ENCODE measurements at regions of chr2 and their contacts with region 1.

Region 1: DNA sequence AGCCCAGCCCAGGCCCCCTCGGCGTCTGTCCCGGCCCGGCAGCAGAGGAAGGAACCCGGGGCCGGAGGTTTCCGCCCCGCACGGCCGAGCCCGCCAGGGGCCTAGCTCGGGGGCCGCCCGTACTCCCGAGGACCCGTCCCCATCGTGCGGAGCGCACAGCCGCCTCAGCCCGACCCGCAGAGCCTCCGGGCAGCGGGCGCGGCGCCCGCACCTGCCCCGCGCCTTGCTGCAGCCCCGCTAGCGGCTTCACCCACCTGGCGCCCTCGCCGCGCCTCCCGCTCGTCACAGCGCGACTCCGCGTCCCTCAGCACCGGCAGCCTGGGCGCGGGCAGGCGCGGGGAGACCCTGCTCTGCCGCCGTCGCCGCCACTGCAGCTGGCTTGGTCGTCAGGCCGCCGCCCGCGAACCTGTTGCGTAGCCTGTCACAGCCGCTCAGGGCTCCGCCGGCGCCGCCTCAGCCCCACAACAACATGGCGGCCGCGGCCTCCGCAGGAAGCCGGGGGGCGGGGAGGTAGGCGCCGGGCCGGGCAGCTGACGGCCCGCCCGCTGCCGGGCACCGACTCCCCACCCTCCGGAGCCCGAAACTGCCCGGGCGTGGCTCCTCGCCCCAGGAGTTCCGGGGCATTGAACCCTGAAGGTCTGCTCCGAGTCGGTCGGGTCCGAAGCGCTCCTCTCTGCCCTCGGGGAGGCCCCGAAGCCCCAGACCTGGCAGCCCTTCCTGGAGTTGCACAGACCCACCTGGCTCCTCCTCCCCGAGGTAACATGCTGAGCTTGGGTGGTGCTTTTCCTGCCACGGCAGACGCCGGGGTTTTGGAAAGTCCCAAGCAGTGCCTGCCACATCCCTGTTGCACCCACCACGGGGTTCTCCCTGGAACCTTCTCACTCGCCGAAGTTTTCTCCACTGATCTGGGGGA is at the start of gene ITSN2:
- ATAC-seq: peak; percentile 85 to 94 (median 89)
- H3K4me3 ChIP-seq: peak within 1 kb of the TSS; percentile 60 to 89 (median 79)
- H3K27ac ChIP-seq: peak within 1 kb of the TSS in 1 of 2 donors; percentile 65
- H3K4me1 ChIP-seq: no peaks in the 10 kb centered on the region
- total RNA-seq, gene ITSN2: 5.1 to 41.5 (median 14.3) TPM

Region 2: DNA sequence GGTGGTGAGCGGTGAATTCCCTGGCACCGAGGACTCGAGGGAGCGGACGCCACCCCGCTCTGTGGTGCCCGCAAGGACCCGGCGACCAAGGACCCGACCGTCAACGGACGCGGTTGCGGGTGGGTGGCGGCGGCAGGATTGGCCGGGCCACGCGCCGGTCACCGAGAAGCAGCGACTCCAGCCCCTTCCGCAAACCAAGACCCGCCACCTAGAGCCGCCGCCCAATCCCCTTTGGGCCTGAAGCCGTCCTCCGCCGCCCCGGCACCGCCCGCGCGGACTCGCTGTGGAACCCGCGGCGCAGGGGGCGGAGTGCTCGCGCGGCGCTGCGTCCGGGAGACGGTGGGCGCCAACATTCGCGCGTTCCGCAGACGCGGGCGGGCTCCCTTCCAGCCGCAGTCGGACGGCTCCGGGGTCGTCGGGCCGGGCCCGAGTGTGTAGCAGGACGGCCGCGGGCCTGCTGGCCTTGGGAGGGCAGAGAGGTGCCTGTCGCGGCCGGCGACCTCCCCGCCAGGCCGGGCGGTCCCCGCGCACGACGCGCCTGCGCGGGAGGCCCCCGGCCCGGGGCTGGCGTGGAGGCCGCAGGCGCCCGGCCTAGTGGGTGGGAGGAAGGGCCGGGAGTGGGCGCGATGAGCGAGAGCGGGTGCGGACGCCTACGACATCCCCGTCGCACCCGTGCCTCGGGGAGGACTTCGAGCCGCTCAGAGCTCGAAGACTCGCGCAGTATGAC is 236.9 kb before region 1 on chr2 and contains the starts of genes FAM228B and PFN4:
- in situ Hi-C with region 1: loop called in 1 of 9 experiments (anchors 25 kb)
- ATAC-seq: peak; percentile 88 to 96 (median 95)
- H3K4me3 ChIP-seq: peak within 1 kb of the TSS; percentile 61 to 89 (median 73)
- H3K27ac ChIP-seq: peak within 1 kb of the TSS; percentile 91 to 93
- H3K4me1 ChIP-seq: peaks cover 8 to 9% of the 10 kb centered on the region in 2 donors
- total RNA-seq, gene FAM228B: 5.7 to 50.3 (median 31.5) TPM
- total RNA-seq, gene PFN4: 1.00 to 3.8 (median 2.0) TPM